ENCODE measurements at regions of chr11 and their contacts with region 1.

Region 1: DNA sequence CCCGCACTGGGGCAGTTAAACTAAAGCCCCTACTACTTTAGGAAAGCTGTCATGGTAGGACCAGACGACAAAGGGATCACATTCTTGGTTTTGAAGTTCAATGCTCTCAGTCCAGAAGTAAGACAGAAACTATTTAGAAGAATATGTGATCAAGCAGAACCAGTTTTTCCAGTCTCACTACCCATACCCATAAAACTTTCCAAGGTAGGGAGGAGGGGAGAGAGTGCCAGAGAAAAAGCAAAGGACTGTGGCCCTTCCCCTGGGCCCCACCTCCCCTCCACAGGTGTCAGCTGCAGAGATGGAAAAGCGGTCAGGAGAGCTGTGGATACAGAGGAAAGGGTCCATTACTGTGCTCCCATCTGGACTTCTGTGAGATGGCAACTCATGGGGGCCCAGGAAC is 587.1 kb downstream of the SOX6 start:
- DNase-seq: peak; percentile 59 to 74
- H3K4me3 ChIP-seq: no peak overlapping the region
- H3K4me3 Mint-ChIP-seq: no peak overlapping the region
- H3K27ac Mint-ChIP-seq: peak overlapping the region; percentile 82
- H3K4me1 ChIP-seq: peaks cover 27% of the 10 kb centered on the region
- H3K4me1 Mint-ChIP-seq: peaks cover 29% of the 10 kb centered on the region
- H3K27me3 ChIP-seq: no peaks in the 10 kb centered on the region
- H3K27me3 Mint-ChIP-seq: no peaks in the 10 kb centered on the region
- CTCF ChIP-seq: no peak

Region 2: GRCh38 chr11:15704064-15704463 is 65.1 kb before region 1 on chr11:
- CTCF ChIA-PET with region 1: no interaction called
- POLR2A ChIA-PET with region 1: no interaction called
- intact Hi-C with region 1: loop called (anchors 5 kb)
- DNase-seq: peak; percentile 65 to 66
- H3K4me3 ChIP-seq: no peak overlapping the region
- H3K4me3 Mint-ChIP-seq: no peak overlapping the region
- H3K27ac Mint-ChIP-seq: no peak overlapping the region
- H3K4me1 ChIP-seq: peaks cover 33% of the 10 kb centered on the region
- H3K4me1 Mint-ChIP-seq: peaks cover 11% of the 10 kb centered on the region
- H3K27me3 ChIP-seq: no peaks in the 10 kb centered on the region
- H3K27me3 Mint-ChIP-seq: no peaks in the 10 kb centered on the region
- CTCF ChIP-seq: no peak

Region 3: DNA sequence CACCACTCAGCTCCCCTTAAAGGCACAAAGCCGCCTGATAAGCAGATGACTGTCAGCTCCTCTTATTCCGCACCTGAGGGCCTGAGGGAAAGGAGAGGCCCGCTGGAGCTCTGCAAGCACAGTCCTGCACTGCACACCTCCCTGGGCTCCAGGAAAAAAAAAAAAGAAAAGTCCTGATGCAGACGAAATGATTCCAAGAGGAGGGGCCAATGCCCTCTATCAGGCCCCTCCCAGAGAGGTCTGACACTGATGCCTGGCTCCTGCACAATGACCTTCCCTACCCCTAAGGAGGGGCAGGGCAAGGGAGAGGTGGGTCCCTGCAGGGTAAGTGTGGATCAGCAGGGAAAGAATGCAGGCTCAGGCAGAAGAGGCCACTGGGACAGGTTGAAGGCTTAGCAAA is 14.4 kb after region 1 on chr11:
- CTCF ChIA-PET with region 1: no interaction called
- POLR2A ChIA-PET with region 1: no interaction called
- intact Hi-C with region 1: no loop called
- DNase-seq: peak; percentile 10 to 46
- H3K4me3 ChIP-seq: no peak overlapping the region
- H3K4me3 Mint-ChIP-seq: no peak overlapping the region
- H3K27ac Mint-ChIP-seq: no peak overlapping the region
- H3K4me1 ChIP-seq: no peaks in the 10 kb centered on the region
- H3K4me1 Mint-ChIP-seq: peaks cover 21% of the 10 kb centered on the region
- H3K27me3 ChIP-seq: no peaks in the 10 kb centered on the region
- H3K27me3 Mint-ChIP-seq: no peaks in the 10 kb centered on the region
- CTCF ChIP-seq: no peak

Measured in Caco-2 (cell line).